Left ventricle myocardium inferior (tissue), 1 donor: ENCODE measurements at regions of chr17 and their contacts with region 1.

Region 1: GRCh38 chr17:8359769-8360168 is 16.7 kb downstream of the KRABD2 start:
- DNase-seq: no peak
- H3K4me3 ChIP-seq: peak overlapping the region; percentile 16
- H3K27ac ChIP-seq: peak overlapping the region; percentile 76
- H3K4me1 ChIP-seq: peaks cover 44% of the 10 kb centered on the region
- H3K27me3 ChIP-seq: no peaks in the 10 kb centered on the region
- CTCF ChIP-seq: no peak

Region 2: DNA sequence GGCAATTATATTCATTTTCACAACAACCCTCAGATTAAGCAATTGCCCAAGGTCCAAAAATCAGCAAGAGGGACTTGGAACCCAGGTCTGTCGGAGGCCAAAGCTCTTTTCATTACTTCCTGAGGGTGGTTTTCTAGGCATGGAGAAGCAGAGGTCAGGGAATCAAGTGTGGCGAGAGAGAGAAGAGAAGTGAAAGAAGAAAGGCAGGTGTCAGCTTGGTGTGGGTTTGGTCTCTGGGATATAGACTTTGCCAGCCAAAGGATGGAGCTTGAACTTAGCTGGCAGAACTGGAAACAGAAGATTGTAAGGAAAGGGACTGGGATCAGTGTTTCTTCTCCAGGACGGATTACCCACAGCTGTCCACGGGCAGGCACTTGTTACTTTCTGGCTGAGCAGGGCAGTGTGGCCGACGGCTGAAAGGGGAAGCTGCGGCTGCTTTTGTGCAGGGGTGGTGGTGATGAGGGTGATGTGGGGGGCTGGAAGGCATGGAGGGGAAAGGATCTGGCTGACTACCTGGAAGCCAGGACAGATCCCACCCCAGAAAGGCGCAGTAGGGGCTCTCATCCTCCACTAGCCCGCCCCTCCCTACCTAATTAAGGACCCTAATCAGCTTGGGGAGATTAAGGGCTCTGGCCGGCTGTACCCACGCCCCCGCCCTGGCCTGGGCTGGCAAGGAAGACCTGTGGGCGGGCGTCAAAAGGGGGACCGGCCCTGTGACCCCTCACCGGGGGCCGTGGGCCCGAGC is 357.6 kb before region 1 on chr17 and contains the start of gene GUCY2D:
- intact Hi-C with region 1: no loop called
- DNase-seq: no peak
- H3K4me3 ChIP-seq: peak within 1 kb of the TSS; percentile 60
- H3K27ac ChIP-seq: no peak within 1 kb of the TSS
- H3K4me1 ChIP-seq: peaks cover 22% of the 10 kb centered on the region
- H3K27me3 ChIP-seq: peaks cover 85% of the 10 kb centered on the region
- CTCF ChIP-seq: no peak
- total RNA-seq, gene GUCY2D: not detected

Region 3: GRCh38 chr17:8222630-8223356 is 137.0 kb before region 1 on chr17:
- intact Hi-C with region 1: no loop called
- DNase-seq: peak; percentile 95
- H3K4me3 ChIP-seq: peak overlapping the region; percentile 75
- H3K27ac ChIP-seq: peak overlapping the region; percentile 99
- H3K4me1 ChIP-seq: peaks cover 52% of the 10 kb centered on the region
- H3K27me3 ChIP-seq: no peaks in the 10 kb centered on the region
- CTCF ChIP-seq: no peak

Region 4: GRCh38 chr17:8314797-8315763 is 44.7 kb before region 1 on chr17:
- intact Hi-C with region 1: loop called (anchors 10 kb)
- DNase-seq: no peak
- H3K4me3 ChIP-seq: peak overlapping the region; percentile 45
- H3K27ac ChIP-seq: peak overlapping the region; percentile 34
- H3K4me1 ChIP-seq: peaks cover 40% of the 10 kb centered on the region
- H3K27me3 ChIP-seq: peaks cover 64% of the 10 kb centered on the region
- CTCF ChIP-seq: no peak